CD8-positive, alpha-beta memory T cell (primary cell): ENCODE measurements at regions of chr15 and their contacts with region 1.

Region 1: GRCh38 chr15:65638681-65639089 is 16.9 kb downstream of the SLC24A1 start:
- DNase-seq: peak in 3 of 5 donors; percentile 11 to 64 (median 61)
- H3K4me3 ChIP-seq: no peak overlapping the region
- H3K4me3 Mint-ChIP-seq: peak overlapping the region in 1 of 7 donors; percentile 5
- H3K27ac ChIP-seq: no peak overlapping the region
- H3K27ac Mint-ChIP-seq: peak overlapping the region in 4 of 8 donors; percentile 0 to 18 (median 0)
- H3K4me1 ChIP-seq: peaks cover 8% of the 10 kb centered on the region
- H3K4me1 Mint-ChIP-seq: peaks cover 6 to 15% (median 7%) of the 10 kb centered on the region in 3 donors
- H3K27me3 ChIP-seq: no peaks in the 10 kb centered on the region
- H3K27me3 Mint-ChIP-seq: no peaks in the 10 kb centered on the region

Region 2: DNA sequence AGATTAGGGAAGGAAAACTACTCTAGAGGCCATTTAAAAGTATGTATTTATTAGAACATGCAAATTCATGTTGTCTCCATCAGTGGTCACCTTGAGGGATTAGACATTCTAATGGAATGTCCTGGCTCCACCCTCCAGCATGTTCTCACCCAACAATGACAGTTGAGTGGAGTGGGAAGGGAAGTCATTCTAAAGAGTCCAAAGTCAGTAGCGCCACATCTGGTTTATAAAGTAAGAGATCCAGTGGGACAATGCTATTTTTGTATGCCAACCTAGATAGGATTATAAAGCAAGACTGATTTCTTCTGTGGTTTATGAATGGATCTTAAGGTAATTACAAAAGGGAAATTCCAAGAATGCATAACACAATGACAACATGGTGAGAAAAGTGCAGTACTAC is 16.3 kb after region 1 on chr15:
- CTCF ChIA-PET with region 1: interaction called, 10 read pairs
- POLR2A ChIA-PET with region 1: no interaction called
- DNase-seq: no peak
- H3K4me3 ChIP-seq: no peak overlapping the region
- H3K4me3 Mint-ChIP-seq: no peak overlapping the region
- H3K27ac ChIP-seq: no peak overlapping the region
- H3K27ac Mint-ChIP-seq: peak overlapping the region in 1 of 8 donors; percentile 87
- H3K4me1 ChIP-seq: no peaks in the 10 kb centered on the region
- H3K4me1 Mint-ChIP-seq: peaks cover 4 to 5% (median 5%) of the 10 kb centered on the region in 3 donors
- H3K27me3 ChIP-seq: no peaks in the 10 kb centered on the region
- H3K27me3 Mint-ChIP-seq: no peaks in the 10 kb centered on the region

Region 3: DNA sequence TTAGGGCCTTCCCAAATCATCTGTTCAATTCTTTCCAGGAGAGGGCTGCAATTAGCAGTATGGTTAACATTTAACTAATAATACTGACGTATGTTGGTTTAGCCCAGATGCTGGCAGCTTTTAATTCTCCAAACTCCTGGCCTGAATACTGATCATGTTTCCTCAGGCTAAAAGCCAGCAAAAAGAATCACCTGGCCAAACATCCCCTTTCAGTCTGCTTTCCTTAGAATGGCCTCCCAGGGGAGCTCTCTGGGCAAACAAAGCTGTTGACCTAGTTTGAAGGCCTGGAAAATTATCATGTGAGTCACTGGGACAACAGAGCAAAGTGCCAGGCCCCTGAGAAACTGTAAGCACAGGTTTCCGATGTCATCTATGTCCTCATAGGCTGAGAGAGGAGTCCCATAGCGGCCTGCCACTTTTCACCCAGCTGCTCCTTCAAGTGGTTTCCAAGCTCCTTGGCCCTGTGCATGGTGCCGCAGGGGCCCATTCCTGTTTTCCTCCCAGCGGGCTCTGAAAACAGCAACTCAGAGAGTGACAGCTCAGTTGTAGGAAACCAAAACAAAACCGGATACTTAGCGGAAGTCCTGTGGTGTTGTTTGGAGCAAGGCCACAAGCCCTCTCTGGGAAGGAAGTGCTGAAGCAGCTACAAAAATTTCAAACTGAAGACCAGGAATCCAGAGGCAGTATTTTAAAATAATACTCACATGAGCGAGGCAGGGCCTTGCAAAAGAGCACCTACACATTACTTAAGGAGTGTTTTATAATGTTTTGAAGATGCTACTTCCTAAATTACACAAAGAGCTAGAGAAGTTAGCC is 194.1 kb after region 1 on chr15:
- CTCF ChIA-PET with region 1: interaction called, 11 read pairs
- POLR2A ChIA-PET with region 1: no interaction called
- DNase-seq: peak; percentile 34 to 68 (median 61)
- H3K4me3 ChIP-seq: peak overlapping the region; percentile 35
- H3K4me3 Mint-ChIP-seq: peak overlapping the region; percentile 14 to 89 (median 82)
- H3K27ac ChIP-seq: peak overlapping the region; percentile 71
- H3K27ac Mint-ChIP-seq: peak overlapping the region; percentile 78 to 100 (median 96)
- H3K4me1 ChIP-seq: peaks cover 50% of the 10 kb centered on the region
- H3K4me1 Mint-ChIP-seq: peaks cover 51 to 62% (median 58%) of the 10 kb centered on the region in 3 donors
- H3K27me3 ChIP-seq: no peaks in the 10 kb centered on the region
- H3K27me3 Mint-ChIP-seq: no peaks in the 10 kb centered on the region

Region 4: DNA sequence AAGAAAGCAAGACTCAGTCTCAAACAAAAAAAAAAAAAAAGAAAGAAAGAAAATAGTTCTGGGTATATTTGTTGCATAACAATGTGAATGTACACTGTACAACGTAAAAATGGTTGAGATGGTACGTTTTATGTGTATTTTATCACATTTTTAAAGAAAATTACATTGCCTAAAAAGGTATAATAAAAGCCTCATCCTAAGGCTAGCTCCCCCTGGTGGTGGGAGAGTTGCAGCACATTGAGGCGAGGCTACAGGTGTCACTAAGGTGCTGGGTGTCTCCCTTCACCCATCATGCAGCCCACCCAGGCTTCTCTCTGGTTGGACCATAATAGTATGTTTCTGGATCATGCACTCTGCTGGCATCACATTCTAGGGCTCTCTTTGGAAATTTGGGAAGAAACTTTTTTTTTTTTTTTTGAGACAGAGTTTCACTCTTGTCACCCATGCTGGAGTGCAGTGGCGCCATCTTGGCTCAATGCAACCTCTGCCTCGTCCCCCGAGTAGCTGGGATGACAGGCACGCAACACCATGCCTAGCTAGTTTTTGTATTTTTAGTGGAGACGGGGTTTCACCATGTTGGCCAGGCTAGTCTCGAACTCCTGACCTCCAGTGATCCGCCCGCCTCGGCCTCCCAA is 218.3 kb after region 1 on chr15:
- CTCF ChIA-PET with region 1: interaction called, 40 read pairs
- POLR2A ChIA-PET with region 1: no interaction called
- DNase-seq: peak; percentile 67 to 88 (median 75)
- H3K4me3 ChIP-seq: no peak overlapping the region
- H3K4me3 Mint-ChIP-seq: peak overlapping the region in 2 of 7 donors; percentile 41 to 60
- H3K27ac ChIP-seq: no peak overlapping the region
- H3K27ac Mint-ChIP-seq: peak overlapping the region in 3 of 8 donors; percentile 22 to 56 (median 28)
- H3K4me1 ChIP-seq: peaks cover 5% of the 10 kb centered on the region
- H3K4me1 Mint-ChIP-seq: peaks cover 12 to 15% (median 13%) of the 10 kb centered on the region in 3 donors
- H3K27me3 ChIP-seq: no peaks in the 10 kb centered on the region
- H3K27me3 Mint-ChIP-seq: peaks cover 0 to 2% of the 10 kb centered on the region in 2 donors

Region 5: GRCh38 chr15:65869127-65869953 is 230.7 kb after region 1 on chr15 and contains the start of gene RAB11A:
- CTCF ChIA-PET with region 1: interaction called, 18 read pairs
- POLR2A ChIA-PET with region 1: interaction called, 6 read pairs
- DNase-seq: peak; percentile 92 to 97 (median 96)
- H3K4me3 ChIP-seq: peak within 1 kb of the TSS; percentile 97
- H3K4me3 Mint-ChIP-seq: peak within 1 kb of the TSS; percentile 97 to 100 (median 99)
- H3K27ac ChIP-seq: peak within 1 kb of the TSS; percentile 96
- H3K27ac Mint-ChIP-seq: peak within 1 kb of the TSS; percentile 97 to 100 (median 98)
- H3K4me1 ChIP-seq: peaks cover 25% of the 10 kb centered on the region
- H3K4me1 Mint-ChIP-seq: peaks cover 25 to 45% (median 43%) of the 10 kb centered on the region in 3 donors
- H3K27me3 ChIP-seq: no peaks in the 10 kb centered on the region
- H3K27me3 Mint-ChIP-seq: peaks cover 0 to 12% of the 10 kb centered on the region in 2 donors
- total RNA-seq, gene RAB11A: 158 to 159 TPM